Uterus (tissue), 4 donors: ENCODE measurements at regions of chr2 and their contacts with region 1.

Region 1: DNA sequence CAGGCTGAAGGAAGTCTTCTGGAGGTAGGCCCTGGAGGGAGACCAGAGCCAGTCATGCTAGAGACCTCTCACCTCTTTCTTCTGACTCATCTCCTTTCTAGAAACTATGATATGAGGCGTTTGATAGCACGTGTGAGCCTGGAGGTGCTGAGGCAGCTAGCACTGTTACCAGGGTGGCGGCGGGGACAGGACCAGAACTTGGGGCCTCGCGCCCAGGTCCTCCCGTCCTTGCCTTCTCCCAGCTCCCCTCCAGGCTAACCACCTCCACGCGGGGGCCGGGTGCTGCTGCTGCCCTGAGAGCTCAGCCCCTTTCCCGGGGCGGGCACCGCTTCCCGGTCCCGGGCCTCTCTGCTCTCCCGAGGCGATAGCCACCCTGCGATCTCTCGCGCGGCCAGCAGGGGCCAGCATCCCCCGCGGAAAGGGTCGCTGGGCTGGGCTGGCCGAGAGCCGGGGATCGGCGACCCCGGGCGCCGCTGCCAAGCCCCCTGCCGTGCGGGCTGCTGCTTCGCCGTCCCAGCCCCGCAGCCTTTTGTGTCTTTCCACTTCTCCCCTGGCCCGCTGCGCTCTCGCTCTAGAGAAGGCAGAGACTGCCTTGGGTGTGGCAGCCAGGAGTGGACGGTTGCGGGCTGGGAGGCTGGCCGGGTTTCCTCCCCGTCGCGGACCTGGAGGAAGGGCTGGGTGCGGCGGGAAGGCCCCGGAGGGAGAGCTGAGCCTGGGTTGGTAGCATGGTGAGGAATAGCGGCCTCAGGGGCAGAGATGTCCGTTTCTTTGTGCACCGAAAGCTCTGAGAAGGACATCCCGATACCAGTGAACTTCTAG is 49.1 kb downstream of the TMEM17 start:
- DNase-seq: peak; percentile 56 to 79
- H3K4me3 ChIP-seq: peak overlapping the region; percentile 52 to 61
- H3K27ac ChIP-seq: peak overlapping the region; percentile 82 to 85
- H3K4me1 ChIP-seq: no peaks in the 10 kb centered on the region
- H3K27me3 ChIP-seq: no peaks in the 10 kb centered on the region
- CTCF ChIP-seq: peak; percentile 94 to 99 (median 96)
- POLR2A ChIP-seq: peak in 1 of 2 donors; percentile 54

Region 2: GRCh38 chr2:62774555-62775366 is 317.8 kb after region 1 on chr2:
- intact Hi-C with region 1: loop called (anchors 5 kb)
- DNase-seq: peak in 1 of 2 donors; percentile 20
- H3K4me3 ChIP-seq: no peak overlapping the region
- H3K27ac ChIP-seq: peak overlapping the region; percentile 3 to 40
- H3K4me1 ChIP-seq: peaks cover 0 to 6% of the 10 kb centered on the region in 2 donors
- H3K27me3 ChIP-seq: no peaks in the 10 kb centered on the region
- CTCF ChIP-seq: peak; percentile 72 to 82 (median 80)
- POLR2A ChIP-seq: no peak